ENCODE measurements at regions of chr14 and their contacts with region 1.

Region 1: DNA sequence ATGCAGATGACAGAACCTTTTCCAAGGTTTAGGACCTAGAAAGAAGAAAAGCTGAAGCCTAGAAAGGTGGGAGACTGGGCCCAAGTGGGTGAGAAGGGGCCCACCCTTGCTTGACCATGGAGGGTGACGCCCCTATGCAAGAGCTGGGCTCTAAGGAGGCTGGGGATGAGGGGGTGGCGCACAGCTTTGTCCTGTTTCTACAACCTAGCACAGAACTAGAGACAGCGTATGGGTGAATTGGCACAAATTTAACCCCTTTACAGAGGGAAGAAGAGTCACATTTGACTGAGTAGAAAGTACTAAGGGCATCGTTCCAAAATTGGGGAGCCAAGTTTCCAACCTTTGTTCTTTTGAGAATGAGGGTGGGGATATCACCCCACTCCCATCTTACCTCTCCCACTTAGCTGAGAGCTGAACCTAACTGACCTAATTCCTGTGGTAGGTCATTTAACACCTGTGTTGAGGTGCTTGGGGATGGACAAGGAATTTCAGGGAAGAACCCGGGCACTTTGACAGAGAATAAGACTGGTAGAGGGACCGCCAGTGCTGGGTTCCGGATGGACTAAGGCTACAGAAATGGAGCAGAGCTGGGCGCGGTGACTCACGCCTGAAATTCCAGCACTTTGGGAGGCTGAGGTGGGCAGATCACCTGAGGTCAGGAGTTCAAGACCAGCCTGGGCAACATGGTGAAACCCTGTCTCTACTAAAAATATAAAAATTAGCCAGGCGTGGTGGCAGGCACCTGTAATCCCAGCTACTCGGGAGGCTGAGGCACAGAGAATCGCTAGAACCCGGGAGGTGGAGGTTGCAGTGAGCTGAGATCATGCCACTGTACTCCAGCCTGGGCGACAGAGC is 5.2 kb downstream of the NFKBIA start:
- DNase-seq: no peak
- H3K4me3 ChIP-seq: no peak overlapping the region
- H3K27ac ChIP-seq: no peak overlapping the region
- H3K4me1 ChIP-seq: peaks cover 29% of the 10 kb centered on the region
- H3K27me3 ChIP-seq: no peaks in the 10 kb centered on the region
- CTCF ChIP-seq: no peak

Region 2: DNA sequence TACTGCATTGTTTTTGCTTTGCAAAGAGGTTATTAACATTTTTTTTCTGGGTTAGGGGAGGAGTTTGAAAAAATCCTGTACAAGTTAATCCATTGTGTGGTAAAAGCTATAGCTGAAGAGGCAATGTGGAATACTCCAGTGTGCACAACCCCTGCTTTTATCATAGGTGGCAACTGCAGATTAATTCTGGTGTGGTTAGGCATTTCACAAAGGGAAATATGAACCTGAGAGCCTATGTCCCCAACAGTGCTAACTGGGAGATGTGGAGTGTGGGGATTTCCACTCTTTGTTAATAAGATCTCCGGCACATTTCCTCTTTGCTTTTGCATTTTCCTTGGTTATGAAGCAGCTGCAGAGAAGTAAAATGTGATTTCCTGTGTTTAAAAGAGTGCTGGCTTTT is 243.3 kb before region 1 on chr14:
- CTCF ChIA-PET with region 1: no interaction called
- POLR2A ChIA-PET with region 1: interaction called, 10 read pairs
- intact Hi-C with region 1: no loop called
- DNase-seq: peak; percentile 72
- H3K4me3 ChIP-seq: no peak overlapping the region
- H3K27ac ChIP-seq: peak overlapping the region; percentile 73
- H3K4me1 ChIP-seq: peaks cover 63% of the 10 kb centered on the region
- H3K27me3 ChIP-seq: no peaks in the 10 kb centered on the region
- CTCF ChIP-seq: no peak